Activated T-helper 2 cell treated with anti-CD3 and anti-CD28 coated beads, Interferon-gamma antibody, Interleukin-2, Interleukin-4, amounts not matched to agents 10 μg/mL and 5 μg/mL and 100 μg/mL, durations not matched to agents 14 hours and 24 hours and 36 hours (primary cell): ENCODE measurements at regions of chr2 and their contacts with region 1.

Region 1: DNA sequence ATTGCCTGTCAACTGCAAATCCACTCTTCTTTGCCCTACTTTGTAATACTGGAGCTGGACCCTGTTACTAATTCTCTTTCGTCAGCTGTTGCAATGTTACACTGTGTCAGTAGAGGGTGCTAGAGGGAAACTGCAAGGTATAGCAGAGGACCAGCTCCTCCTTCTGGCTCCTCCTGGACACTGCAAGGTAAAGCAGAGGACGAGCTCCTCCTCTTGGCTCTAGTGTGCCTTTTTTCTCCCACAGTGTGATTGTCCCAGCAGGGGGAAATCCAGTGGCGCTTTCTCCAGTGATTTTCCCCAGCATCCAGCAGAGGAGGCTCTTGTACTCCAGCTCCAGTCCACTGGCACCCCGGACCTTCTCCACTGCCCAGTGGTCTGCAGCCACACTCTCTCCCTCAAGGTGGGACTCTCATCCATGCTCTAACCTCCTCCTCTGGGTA is 95.6 kb downstream of the CAPN13 start:
- DNase-seq: peak; percentile 79
- H3K4me3 Mint-ChIP-seq: no peak overlapping the region
- H3K27ac Mint-ChIP-seq: no peak overlapping the region
- H3K4me1 Mint-ChIP-seq: peaks cover 9% of the 10 kb centered on the region
- H3K27me3 Mint-ChIP-seq: no peaks in the 10 kb centered on the region

Region 2: GRCh38 chr2:30146438-30147147 is 565.1 kb before region 1 on chr2 and contains the start of gene YPEL5:
- intact Hi-C with region 1: loop called (anchors 5 kb)
- DNase-seq: peak; percentile 99
- H3K4me3 Mint-ChIP-seq: peak within 1 kb of the TSS; percentile 77
- H3K27ac Mint-ChIP-seq: peak within 1 kb of the TSS; percentile 92
- H3K4me1 Mint-ChIP-seq: peaks cover 34% of the 10 kb centered on the region
- H3K27me3 Mint-ChIP-seq: no peaks in the 10 kb centered on the region
- total RNA-seq, gene YPEL5: 24.1 and 27.8 TPM in 2 replicates

Region 3: GRCh38 chr2:30208452-30208851 is 503.2 kb before region 1 on chr2:
- intact Hi-C with region 1: loop called (anchors 1 kb)
- DNase-seq: no peak
- H3K4me3 Mint-ChIP-seq: no peak overlapping the region
- H3K27ac Mint-ChIP-seq: no peak overlapping the region
- H3K4me1 Mint-ChIP-seq: peaks cover 14% of the 10 kb centered on the region
- H3K27me3 Mint-ChIP-seq: peaks cover 10% of the 10 kb centered on the region

Region 4: GRCh38 chr2:31138037-31138962 is 426.6 kb after region 1 on chr2 and contains the start of gene GALNT14:
- intact Hi-C with region 1: no loop called
- DNase-seq: peak; percentile 13
- H3K4me3 Mint-ChIP-seq: peak within 1 kb of the TSS; percentile 58
- H3K27ac Mint-ChIP-seq: no peak within 1 kb of the TSS
- H3K4me1 Mint-ChIP-seq: peaks cover 5% of the 10 kb centered on the region
- H3K27me3 Mint-ChIP-seq: peaks cover 55% of the 10 kb centered on the region
- total RNA-seq, gene GALNT14: 0.50 and 0.90 TPM in 2 replicates

Region 5: DNA sequence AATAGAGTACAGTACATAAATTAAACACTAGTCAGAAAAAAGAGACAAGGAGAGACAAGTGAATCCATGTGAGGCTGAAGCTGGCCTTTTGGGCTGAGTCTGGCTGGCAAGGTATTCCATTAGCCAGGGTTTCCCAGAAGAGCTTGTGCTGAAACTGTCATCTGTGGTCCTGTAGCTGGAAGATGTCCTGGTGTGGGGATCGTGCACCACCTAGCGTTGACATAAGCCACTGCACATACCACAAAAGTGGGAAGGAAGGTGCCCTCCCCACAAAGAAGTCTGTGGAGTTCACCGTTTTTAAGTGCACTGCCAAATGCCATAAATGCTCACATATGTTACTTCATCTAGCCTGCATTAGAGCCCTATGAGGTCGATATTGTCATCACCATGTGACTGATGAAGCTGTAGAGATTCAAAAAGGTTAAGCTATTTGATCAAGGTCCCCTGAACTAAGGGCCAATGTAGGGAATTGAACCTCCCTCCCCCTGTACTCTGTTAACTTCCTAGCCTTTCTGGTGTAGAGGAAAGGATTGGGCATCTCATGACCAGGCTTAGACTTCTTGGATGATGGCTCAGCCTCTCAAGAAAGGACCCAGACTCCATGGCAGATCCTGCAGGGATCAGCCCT is 458.5 kb after region 1 on chr2:
- intact Hi-C with region 1: loop called (anchors 1 kb)
- DNase-seq: peak; percentile 28
- H3K4me3 Mint-ChIP-seq: no peak overlapping the region
- H3K27ac Mint-ChIP-seq: no peak overlapping the region
- H3K4me1 Mint-ChIP-seq: peaks cover under 1% of the 10 kb centered on the region
- H3K27me3 Mint-ChIP-seq: peaks cover 9% of the 10 kb centered on the region

Region 6: GRCh38 chr2:31523871-31524492 is 812.3 kb after region 1 on chr2:
- intact Hi-C with region 1: loop called (anchors 10 kb)
- DNase-seq: peak; percentile 23
- H3K4me3 Mint-ChIP-seq: no peak overlapping the region
- H3K27ac Mint-ChIP-seq: no peak overlapping the region
- H3K4me1 Mint-ChIP-seq: no peaks in the 10 kb centered on the region
- H3K27me3 Mint-ChIP-seq: peaks cover 6% of the 10 kb centered on the region